Activated naive CD4-positive, alpha-beta T cell treated with anti-CD3 and anti-CD28 coated beads for 36 hours (primary cell): ENCODE measurements at regions of chr10 and their contacts with region 1.

Region 1: DNA sequence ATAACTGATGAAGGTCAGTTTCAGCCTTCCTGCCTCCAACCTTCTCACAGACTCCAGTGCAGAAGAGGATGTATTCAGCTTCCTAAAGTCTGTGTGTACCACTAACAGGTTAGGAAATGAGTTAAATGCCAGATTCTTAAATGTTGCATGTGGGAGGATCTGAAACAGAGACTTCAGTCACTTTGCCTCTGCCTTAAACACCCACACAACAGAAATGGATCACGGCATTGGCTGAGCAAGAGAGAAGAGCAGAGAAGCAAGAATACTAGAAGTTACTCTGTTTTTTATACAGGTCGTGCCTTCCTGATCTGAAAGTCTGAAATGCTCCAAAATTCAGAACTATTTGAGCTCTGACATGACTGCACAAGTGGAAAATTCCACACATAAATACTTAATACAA is 98.9 kb upstream of the ARHGAP21 start:
- DNase-seq: peak; percentile 35
- H3K4me3 Mint-ChIP-seq: no peak overlapping the region
- H3K27ac Mint-ChIP-seq: no peak overlapping the region
- H3K4me1 Mint-ChIP-seq: peaks cover 45% of the 10 kb centered on the region
- H3K27me3 Mint-ChIP-seq: no peaks in the 10 kb centered on the region

Region 2: GRCh38 chr10:24465891-24466818 is 356.4 kb before region 1 on chr10:
- CTCF ChIA-PET with region 1: no interaction called
- intact Hi-C with region 1: loop called (anchors 5 kb)
- DNase-seq: peak; percentile 76
- H3K4me3 Mint-ChIP-seq: no peak overlapping the region
- H3K27ac Mint-ChIP-seq: peak overlapping the region; percentile 28
- H3K4me1 Mint-ChIP-seq: peaks cover 31% of the 10 kb centered on the region
- H3K27me3 Mint-ChIP-seq: peaks cover 8% of the 10 kb centered on the region

Region 3: DNA sequence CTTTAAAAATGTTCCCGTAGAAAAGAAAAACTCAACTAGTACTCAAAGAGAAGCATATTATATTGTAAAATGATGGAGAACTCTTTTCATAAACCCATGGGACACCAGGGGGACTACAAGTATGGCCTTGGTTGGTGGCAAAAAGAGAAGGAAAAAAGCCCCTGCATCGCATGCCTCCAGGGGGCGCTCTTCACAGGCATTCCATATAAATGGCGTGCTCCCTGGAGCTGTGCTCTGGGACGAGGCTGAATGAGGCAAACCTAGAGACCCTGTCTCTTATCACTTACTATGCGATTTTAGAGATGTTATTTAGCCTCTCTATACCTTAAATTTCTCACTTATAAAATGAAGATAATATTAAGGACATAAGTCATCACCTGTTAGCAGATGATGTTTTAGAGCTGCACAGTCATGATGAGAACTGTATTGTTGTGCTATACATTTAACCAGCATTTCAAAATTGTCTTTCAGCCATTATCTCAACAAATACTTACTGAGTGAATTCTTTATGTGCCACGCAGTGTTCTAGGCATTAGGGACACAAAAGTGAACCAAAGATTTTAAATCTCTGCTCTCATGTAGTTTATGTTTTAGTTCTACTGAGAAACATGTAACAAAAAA is 204.7 kb before region 1 on chr10:
- CTCF ChIA-PET with region 1: interaction called, 3 read pairs
- intact Hi-C with region 1: loop called (anchors 5 kb)
- DNase-seq: peak; percentile 70
- H3K4me3 Mint-ChIP-seq: peak overlapping the region; percentile 3
- H3K27ac Mint-ChIP-seq: no peak overlapping the region
- H3K4me1 Mint-ChIP-seq: peaks cover 29% of the 10 kb centered on the region
- H3K27me3 Mint-ChIP-seq: no peaks in the 10 kb centered on the region

Region 4: DNA sequence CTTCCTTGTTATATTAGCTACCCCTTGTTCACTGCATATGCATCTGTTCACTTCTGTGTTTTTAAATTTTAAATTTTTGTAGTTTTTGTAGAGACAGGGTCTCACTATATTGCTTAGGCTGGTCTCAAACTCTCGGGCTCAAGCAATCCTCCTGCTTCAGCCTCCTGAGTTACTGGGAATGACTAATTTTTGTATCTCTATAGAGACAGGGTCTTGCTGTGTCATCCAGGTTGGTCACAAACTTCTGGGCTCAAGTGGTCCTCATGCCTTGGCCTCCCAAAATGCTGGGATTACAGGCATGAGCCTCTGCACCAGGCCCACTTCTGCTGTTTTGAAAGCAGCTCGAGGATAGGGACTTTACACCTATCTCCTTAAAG is 65.3 kb after region 1 on chr10:
- CTCF ChIA-PET with region 1: interaction called, 3 read pairs
- intact Hi-C with region 1: loop called (anchors 5 kb)
- DNase-seq: no peak
- H3K4me3 Mint-ChIP-seq: no peak overlapping the region
- H3K27ac Mint-ChIP-seq: no peak overlapping the region
- H3K4me1 Mint-ChIP-seq: peaks cover 41% of the 10 kb centered on the region
- H3K27me3 Mint-ChIP-seq: no peaks in the 10 kb centered on the region

Region 5: DNA sequence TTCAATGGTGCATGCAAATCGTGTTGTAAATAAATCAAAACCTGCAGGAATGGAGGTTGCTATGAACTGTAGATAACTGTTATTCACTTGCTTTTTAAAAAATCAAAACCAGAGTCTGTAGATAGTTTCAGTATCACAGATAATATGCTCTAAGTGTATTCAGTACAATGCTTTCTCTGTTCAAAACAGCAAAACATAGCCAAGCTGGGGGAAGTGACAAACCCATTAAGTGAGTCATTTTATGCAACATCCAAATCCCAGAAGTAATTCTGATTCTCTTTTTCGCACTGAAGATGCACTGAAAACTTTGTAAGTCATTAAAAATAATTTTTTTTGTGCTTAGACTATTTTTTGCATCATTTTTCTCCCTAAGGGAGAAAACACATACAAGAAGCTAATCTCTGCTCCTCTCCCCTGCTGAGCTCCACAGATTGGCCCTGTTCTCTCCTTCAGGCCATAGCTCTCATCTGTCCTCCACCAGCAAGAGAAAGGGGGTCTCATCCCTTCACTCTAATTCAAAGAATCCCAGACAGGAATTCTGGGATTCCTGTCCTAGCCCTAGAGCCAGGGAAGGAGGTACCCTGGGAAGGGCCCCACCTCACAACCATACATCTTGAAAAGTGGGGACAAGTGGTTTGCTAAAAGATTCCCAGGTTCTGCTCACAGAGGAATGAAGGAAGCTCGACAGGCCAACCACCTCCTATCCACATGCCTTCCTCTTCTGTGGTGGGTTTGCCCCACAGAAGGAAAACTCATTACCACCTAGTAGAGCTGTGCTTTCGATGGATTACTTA is 124.9 kb after region 1 on chr10:
- CTCF ChIA-PET with region 1: no interaction called
- intact Hi-C with region 1: loop called (anchors 2 kb)
- DNase-seq: no peak
- H3K4me3 Mint-ChIP-seq: no peak overlapping the region
- H3K27ac Mint-ChIP-seq: no peak overlapping the region
- H3K4me1 Mint-ChIP-seq: peaks cover 14% of the 10 kb centered on the region
- H3K27me3 Mint-ChIP-seq: no peaks in the 10 kb centered on the region